Common myeloid progenitor, CD34-positive (primary cell): ENCODE measurements at regions of chr2 and their contacts with region 1.

Region 1: DNA sequence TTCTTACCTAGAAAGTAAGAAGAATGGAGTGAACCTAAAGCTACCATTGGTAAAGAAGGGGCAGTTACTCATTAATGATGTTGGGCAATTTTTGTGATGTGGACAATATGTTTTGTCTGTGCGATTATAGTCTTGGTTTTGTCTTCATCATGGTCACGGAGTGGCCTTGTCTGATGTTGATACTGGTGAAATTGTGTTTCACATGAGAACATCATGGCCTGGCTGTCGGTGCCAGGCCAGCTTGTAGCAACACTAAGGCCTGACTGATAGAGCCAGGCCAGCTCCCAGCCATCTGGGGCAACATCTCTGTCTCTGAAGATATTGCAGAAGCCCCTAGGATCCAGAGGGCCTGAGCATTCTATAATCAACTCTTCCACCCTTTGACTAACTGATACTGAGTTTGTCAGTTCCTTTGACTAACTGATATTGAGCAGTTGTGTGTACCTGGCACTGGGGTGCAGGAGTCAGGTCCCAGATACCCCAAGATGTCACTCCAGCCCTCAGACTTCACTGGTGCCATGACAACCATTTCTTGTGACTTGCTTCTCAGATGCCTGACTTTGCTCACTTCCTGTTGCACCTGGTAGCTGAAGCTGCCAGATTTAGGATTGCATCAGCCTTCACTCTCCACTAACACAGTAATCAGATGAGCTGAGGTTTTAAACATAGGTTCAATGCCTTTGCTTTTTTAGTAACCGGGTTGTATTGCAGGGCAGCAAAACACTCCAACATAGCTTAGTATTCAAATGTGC is 62.5 kb downstream of the RPIA start:
- DNase-seq: peak; percentile 32 to 87 (median 70)
- H3K4me3 ChIP-seq: peak overlapping the region in 1 of 7 experiments; percentile 20
- H3K27ac ChIP-seq: peak overlapping the region; percentile 12 to 74
- H3K4me1 ChIP-seq: peaks cover 0 to 25% (median 11%) of the 10 kb centered on the region in 4 experiments
- H3K27me3 ChIP-seq: no peaks in the 10 kb centered on the region

Region 2: DNA sequence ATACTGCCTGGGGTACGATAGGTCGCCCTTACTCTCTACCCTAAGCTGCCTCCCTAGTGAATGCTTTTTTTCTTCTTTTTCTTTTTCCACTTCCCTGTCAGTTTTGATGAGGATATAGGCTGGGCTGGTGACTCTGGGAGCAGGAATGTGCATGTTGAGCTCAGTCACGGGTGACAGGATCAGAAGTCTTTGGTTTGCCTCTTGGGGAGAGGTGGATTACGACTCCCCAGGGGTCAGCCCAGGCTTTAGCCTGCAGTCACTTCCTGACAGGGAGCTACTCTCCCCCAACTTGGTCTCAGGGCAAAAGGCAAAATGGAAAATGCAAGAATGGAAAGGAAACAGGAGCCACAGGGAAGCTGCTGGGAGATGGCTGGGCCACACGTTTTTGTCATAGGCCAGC is 526.6 kb before region 1 on chr2:
- CTCF ChIA-PET with region 1: no interaction called
- POLR2A ChIA-PET with region 1: no interaction called
- DNase-seq: no peak
- H3K4me3 ChIP-seq: no peak overlapping the region
- H3K27ac ChIP-seq: no peak overlapping the region
- H3K4me1 ChIP-seq: no peaks in the 10 kb centered on the region
- H3K27me3 ChIP-seq: no peaks in the 10 kb centered on the region

Region 3: GRCh38 chr2:88739985-88740600 is 13.9 kb before region 1 on chr2:
- CTCF ChIA-PET with region 1: interaction called, 15 read pairs
- POLR2A ChIA-PET with region 1: no interaction called
- DNase-seq: peak; percentile 71 to 87 (median 80)
- H3K4me3 ChIP-seq: no peak overlapping the region
- H3K27ac ChIP-seq: no peak overlapping the region
- H3K4me1 ChIP-seq: peaks cover 6 to 32% (median 18%) of the 10 kb centered on the region in 4 experiments
- H3K27me3 ChIP-seq: no peaks in the 10 kb centered on the region

Region 4: DNA sequence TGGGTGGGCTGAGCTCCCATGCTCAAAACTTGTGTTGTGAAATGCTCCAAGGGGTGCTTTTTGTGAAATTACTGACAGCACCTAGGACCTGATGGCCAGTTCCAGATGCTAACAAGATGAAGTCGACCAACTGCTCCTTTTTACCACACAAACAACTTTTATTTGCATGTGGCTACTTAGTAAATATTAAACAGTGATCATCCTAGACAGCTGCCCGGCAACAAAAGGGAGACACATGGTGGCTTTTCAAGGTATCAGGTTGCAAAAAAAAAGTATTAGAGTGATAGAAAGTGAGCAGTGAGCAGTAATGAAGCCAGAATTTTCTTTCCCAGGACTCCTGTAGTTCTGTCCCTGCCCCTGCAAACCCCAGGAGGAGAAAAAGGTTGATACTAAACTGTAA is 56.0 kb after region 1 on chr2:
- CTCF ChIA-PET with region 1: no interaction called
- POLR2A ChIA-PET with region 1: no interaction called
- DNase-seq: no peak
- H3K4me3 ChIP-seq: no peak overlapping the region
- H3K27ac ChIP-seq: no peak overlapping the region
- H3K4me1 ChIP-seq: no peaks in the 10 kb centered on the region
- H3K27me3 ChIP-seq: no peaks in the 10 kb centered on the region